Breast epithelium (tissue), 4 donors: ENCODE measurements at regions of chr2 and their contacts with region 1.

Region 1: DNA sequence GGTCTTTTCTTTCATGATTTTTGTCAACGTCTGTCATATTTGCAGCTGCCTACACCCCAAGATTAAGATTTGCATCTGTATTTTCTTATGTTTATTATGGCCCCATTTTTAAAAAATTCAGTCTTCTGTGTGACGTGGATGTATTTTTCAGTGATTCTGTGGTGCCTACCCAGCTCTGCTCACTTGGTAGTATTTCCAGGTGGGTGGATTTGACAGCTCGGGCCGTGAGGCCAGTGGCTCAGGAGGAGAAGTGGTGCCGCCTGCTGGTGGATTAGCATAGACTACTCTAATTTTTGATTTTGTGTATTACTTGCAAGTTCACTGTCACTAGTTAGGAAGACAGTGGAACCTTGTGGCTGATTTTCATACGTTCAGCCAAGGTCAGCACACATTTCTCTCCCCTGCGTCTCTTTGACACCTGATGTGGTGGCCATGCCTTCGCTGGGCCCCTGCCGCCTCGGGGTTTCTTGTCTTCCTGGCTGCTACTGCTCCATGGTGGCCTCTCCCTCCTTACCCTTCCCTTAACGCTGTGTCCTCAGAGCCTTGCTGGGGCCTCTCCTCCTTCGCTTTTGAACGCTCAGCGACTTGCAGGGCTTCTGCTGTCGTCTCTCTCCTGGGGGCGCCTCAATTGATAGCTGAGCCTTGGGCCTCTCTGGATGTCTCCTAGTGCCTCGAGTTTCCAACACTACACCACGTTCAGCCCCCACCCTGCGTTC is 89.3 kb downstream of the DGKD start:
- DNase-seq: peak; percentile 62 to 79
- H3K4me3 ChIP-seq: no peak overlapping the region
- H3K27ac ChIP-seq: no peak overlapping the region
- H3K4me1 ChIP-seq: no peaks in the 10 kb centered on the region
- H3K27me3 ChIP-seq: no peaks in the 10 kb centered on the region
- CTCF ChIP-seq: peak; percentile 65 to 86 (median 85)
- POLR2A ChIP-seq: no peak

Region 2: GRCh38 chr2:233353769-233354499 is 89.7 kb before region 1 on chr2 and contains the start of gene DGKD:
- intact Hi-C with region 1: loop called (anchors 5 kb)
- DNase-seq: peak in 1 of 2 donors; percentile 31
- H3K4me3 ChIP-seq: peak within 1 kb of the TSS; percentile 60 to 90 (median 73)
- H3K27ac ChIP-seq: peak within 1 kb of the TSS; percentile 52 to 58
- H3K4me1 ChIP-seq: peaks cover 0 to 7% of the 10 kb centered on the region in 2 donors
- H3K27me3 ChIP-seq: no peaks in the 10 kb centered on the region
- CTCF ChIP-seq: no peak
- POLR2A ChIP-seq: no peak
- total RNA-seq, gene DGKD: 17.1 to 41.3 (median 37.3) TPM

Region 3: DNA sequence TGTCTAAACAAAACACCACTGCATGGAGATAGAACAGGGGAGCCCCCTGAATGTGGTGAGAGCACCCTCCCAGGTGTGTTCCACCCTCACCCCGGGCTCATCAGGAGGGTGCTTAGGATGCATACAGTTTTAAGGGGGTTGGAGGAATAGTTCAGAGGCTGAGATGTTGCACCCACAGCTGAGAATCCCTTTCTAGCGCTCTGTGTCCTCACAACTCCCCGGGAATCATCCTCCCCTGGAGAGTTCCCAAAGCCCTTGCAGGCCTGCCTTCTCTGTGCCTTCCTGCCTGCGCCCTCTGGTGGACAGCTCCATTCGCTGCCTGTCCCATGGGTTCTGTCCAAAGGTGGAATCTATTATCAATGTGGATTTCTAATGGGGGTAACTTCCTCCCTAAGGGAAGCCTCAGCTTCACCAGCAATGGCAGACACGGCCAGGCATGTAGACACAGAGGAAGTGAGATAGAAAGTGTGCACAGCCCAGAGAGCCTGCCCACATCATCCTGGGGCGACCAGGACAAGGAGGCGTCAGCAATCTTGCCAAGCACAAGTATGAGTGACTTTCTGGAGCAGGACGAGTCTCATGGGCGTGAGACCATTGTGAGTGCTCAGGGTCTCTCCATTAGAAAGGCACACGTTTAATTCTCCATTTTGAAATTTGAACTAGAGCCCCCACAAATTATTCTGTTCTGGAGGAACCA is 267.8 kb after region 1 on chr2:
- intact Hi-C with region 1: loop called (anchors 10 kb)
- DNase-seq: peak; percentile 24 to 84
- H3K4me3 ChIP-seq: no peak overlapping the region
- H3K27ac ChIP-seq: no peak overlapping the region
- H3K4me1 ChIP-seq: no peaks in the 10 kb centered on the region
- H3K27me3 ChIP-seq: no peaks in the 10 kb centered on the region
- CTCF ChIP-seq: peak; percentile 62 to 69 (median 63)
- POLR2A ChIP-seq: no peak

Region 4: DNA sequence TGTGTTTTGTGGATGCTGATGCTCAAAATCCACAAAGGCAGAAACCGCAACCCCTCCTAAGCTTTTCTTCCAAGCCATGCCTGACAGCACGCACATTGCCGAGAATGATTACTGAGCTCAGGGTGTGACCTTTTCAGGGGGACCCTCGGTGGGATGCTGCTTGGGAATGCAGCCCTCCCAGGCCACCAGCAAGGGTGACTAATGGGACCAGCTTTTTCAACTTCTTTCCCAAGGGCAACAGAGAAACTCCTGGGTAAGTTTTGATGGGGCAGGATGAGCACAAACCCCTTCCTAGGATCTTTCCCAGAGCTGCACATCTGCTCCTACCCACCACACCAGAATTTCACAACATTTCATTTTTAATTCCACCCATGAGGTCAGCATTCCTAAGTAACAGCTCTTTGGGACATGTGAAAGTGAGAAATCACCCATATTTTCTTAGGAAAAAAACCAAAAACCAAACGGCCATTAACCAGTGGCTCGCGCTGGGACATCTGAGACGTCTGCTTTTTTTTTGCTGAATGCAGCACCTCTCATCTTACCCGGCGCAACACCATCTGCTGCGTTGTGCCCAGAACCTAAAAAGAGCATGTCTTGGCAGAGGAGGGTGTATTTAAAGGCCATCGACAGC is 934.2 kb after region 1 on chr2:
- intact Hi-C with region 1: no loop called
- DNase-seq: no peak
- H3K4me3 ChIP-seq: no peak overlapping the region
- H3K27ac ChIP-seq: peak overlapping the region; percentile 62 to 68
- H3K4me1 ChIP-seq: no peaks in the 10 kb centered on the region
- H3K27me3 ChIP-seq: no peaks in the 10 kb centered on the region
- CTCF ChIP-seq: no peak
- POLR2A ChIP-seq: no peak